PC-9 (cell line): ENCODE measurements at regions of chr4 and their contacts with region 1.

Region 1: DNA sequence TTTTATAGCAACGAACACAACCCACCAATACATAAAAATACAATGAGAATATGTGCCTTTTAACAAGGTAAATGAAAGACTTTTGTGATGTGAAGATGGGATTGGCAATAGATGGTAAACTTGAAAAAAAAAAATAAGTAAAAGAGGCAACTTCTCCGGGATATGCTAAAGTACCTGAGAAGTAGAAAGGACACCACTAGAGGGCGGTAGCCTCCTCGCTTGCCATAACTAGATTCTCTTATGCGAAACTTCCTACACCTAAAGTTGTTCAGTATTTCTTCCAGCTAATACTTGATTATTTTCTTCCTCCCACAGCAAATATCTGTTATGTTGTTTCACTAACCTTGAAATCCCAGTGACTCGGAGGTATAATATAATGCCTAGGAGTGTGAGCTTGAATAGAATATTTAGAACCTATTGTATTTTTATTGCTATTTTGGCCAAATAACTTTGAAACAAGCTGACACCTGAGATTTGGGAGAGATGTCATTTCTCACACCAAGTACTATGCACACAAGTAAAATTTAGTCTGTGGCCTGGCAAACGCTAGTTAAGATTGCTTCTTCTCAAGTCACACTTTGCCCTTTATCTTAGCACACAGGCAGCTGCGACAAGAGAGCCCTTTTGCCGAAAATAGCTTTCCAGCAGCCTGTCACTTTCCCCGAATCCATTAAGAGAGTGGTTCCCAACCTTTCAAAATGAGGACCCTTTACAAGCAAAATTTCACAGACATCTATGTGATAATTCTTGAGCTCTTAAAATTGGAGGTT is 44.9 kb upstream of the PDLIM5 start:
- DNase-seq: peak; percentile 43 to 50
- H3K4me3 ChIP-seq: no peak overlapping the region
- H3K27ac ChIP-seq: no peak overlapping the region
- H3K4me1 ChIP-seq: peaks cover 5% of the 10 kb centered on the region
- H3K27me3 ChIP-seq: no peaks in the 10 kb centered on the region
- CTCF ChIP-seq: peak; percentile 78

Region 2: GRCh38 chr4:94171616-94172015 is 235.2 kb before region 1 on chr4:
- CTCF ChIA-PET with region 1: no interaction called
- POLR2A ChIA-PET with region 1: no interaction called
- intact Hi-C with region 1: no loop called
- DNase-seq: no peak
- H3K4me3 ChIP-seq: no peak overlapping the region
- H3K27ac ChIP-seq: no peak overlapping the region
- H3K4me1 ChIP-seq: no peaks in the 10 kb centered on the region
- H3K27me3 ChIP-seq: no peaks in the 10 kb centered on the region
- CTCF ChIP-seq: peak; percentile 59

Region 3: GRCh38 chr4:94304365-94304971 is 102.4 kb before region 1 on chr4:
- CTCF ChIA-PET with region 1: no interaction called
- POLR2A ChIA-PET with region 1: no interaction called
- intact Hi-C with region 1: no loop called
- DNase-seq: peak in 1 of 2 experiments; percentile 6
- H3K4me3 ChIP-seq: no peak overlapping the region
- H3K27ac ChIP-seq: no peak overlapping the region
- H3K4me1 ChIP-seq: no peaks in the 10 kb centered on the region
- H3K27me3 ChIP-seq: no peaks in the 10 kb centered on the region
- CTCF ChIP-seq: peak; percentile 71

Region 4: GRCh38 chr4:94595879-94596483 is 189.1 kb after region 1 on chr4:
- CTCF ChIA-PET with region 1: no interaction called
- POLR2A ChIA-PET with region 1: no interaction called
- intact Hi-C with region 1: loop called (anchors 2 kb)
- DNase-seq: peak in 1 of 2 experiments; percentile 53
- H3K4me3 ChIP-seq: no peak overlapping the region
- H3K27ac ChIP-seq: no peak overlapping the region
- H3K4me1 ChIP-seq: no peaks in the 10 kb centered on the region; the same call in 1 of the 2 replicates
- H3K27me3 ChIP-seq: no peaks in the 10 kb centered on the region
- CTCF ChIP-seq: peak; percentile 77